SK-N-SH (cell line): ENCODE measurements at regions of chr3 and their contacts with region 1.

Region 1: GRCh38 chr3:124995460-124995994 is 60.3 kb downstream of the HEG1 start:
- DNase-seq: peak; percentile 73
- H3K4me3 ChIP-seq: no peak overlapping the region; a peak in 1 of 4 replicates
- H3K27ac ChIP-seq: no peak overlapping the region
- H3K4me1 ChIP-seq: peaks cover 0 to 38% of the 10 kb centered on the region in 2 experiments; a peak in 2 of 4 replicates
- H3K27me3 ChIP-seq: no peaks in the 10 kb centered on the region
- CTCF ChIP-seq: peak; percentile 69
- EP300 ChIP-seq: no peak
- RAD21 ChIP-seq: peak; percentile 96

Region 2: GRCh38 chr3:124928333-124929202 is 67.0 kb before region 1 on chr3:
- CTCF ChIA-PET with region 1: interaction called, 11 read pairs
- POLR2A ChIA-PET with region 1: no interaction called
- DNase-seq: peak; percentile 39
- H3K4me3 ChIP-seq: peak overlapping the region in 1 of 2 experiments; percentile 48; a peak in 1 of 4 replicates
- H3K27ac ChIP-seq: no peak overlapping the region
- H3K4me1 ChIP-seq: no peaks in the 10 kb centered on the region; a peak in 1 of 4 replicates
- H3K27me3 ChIP-seq: no peaks in the 10 kb centered on the region
- CTCF ChIP-seq: peak; percentile 90
- EP300 ChIP-seq: no peak
- RAD21 ChIP-seq: peak; percentile 80

Region 3: DNA sequence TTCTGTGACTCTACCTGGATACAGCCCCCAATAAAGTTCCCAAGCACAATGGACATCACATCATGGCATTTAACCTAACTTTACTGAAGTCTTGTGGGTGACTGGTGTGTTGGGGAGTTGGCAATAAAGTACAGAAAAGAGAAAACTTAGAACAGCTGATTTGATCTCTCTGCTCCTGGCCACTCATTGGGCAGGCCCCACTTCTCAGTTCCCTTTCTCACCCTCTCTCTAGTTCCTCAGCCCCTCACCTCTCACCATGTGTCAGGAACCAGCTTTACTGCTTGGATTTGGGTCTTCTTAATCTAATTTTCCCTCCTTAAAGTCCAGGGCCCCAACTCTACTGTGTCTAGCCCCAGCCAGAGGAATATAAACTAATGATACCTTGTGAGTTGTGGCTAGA is 60.3 kb before region 1 on chr3:
- CTCF ChIA-PET with region 1: interaction called, 11 read pairs
- POLR2A ChIA-PET with region 1: no interaction called
- DNase-seq: no peak
- H3K4me3 ChIP-seq: no peak overlapping the region
- H3K27ac ChIP-seq: no peak overlapping the region
- H3K4me1 ChIP-seq: peaks cover 0 to 4% of the 10 kb centered on the region in 2 experiments; a peak in 1 of 4 replicates
- H3K27me3 ChIP-seq: no peaks in the 10 kb centered on the region
- CTCF ChIP-seq: no peak
- EP300 ChIP-seq: no peak
- RAD21 ChIP-seq: no peak

Region 4: DNA sequence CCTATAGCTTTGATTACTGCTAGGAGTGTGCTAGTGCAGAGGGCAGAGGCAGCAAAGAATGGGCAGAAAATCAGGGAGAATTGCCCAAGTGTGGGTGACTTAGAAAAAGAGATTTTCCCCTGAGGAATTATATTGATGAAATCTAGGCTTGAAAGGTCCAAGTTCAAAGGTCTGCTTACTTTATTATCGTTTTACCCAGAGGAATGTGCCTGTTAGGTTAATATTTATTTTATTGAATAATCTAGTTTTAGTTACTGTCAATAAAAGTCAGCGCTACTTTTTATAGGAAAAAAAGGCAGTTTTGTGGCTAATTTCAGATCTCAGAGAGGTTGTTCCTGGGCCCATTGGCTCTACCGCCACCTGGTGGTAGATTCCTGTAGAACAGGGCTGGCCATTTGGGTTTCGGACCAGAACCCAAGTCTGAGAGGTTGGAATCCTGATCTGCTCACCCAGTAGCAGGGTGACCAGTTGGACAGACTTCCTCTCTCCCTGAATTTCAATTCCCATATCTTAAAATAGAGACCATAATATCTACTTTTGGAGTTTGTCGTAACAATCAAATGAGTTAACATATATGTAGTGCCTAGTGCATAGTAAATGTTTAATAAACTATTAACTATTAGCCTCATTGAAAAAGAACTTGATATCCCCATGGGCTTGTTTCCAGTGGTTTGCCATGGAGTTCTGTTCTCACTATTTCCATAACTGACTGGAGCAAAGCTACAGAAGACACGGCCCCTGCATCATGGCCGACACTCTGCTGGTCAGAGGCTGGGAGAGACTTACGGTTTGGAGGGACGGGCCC is 442.3 kb after region 1 on chr3:
- CTCF ChIA-PET with region 1: interaction called, 93 read pairs
- POLR2A ChIA-PET with region 1: no interaction called
- DNase-seq: peak; percentile 54
- H3K4me3 ChIP-seq: no peak overlapping the region; a peak in 1 of 4 replicates
- H3K27ac ChIP-seq: no peak overlapping the region
- H3K4me1 ChIP-seq: peaks cover 0 to 6% of the 10 kb centered on the region in 2 experiments; a peak in 1 of 4 replicates
- H3K27me3 ChIP-seq: no peaks in the 10 kb centered on the region
- CTCF ChIP-seq: peak; percentile 97
- EP300 ChIP-seq: no peak
- RAD21 ChIP-seq: peak; percentile 90